Esophagus muscularis mucosa (tissue), 4 donors: ENCODE measurements at regions of chr3 and their contacts with region 1.

Region 1: DNA sequence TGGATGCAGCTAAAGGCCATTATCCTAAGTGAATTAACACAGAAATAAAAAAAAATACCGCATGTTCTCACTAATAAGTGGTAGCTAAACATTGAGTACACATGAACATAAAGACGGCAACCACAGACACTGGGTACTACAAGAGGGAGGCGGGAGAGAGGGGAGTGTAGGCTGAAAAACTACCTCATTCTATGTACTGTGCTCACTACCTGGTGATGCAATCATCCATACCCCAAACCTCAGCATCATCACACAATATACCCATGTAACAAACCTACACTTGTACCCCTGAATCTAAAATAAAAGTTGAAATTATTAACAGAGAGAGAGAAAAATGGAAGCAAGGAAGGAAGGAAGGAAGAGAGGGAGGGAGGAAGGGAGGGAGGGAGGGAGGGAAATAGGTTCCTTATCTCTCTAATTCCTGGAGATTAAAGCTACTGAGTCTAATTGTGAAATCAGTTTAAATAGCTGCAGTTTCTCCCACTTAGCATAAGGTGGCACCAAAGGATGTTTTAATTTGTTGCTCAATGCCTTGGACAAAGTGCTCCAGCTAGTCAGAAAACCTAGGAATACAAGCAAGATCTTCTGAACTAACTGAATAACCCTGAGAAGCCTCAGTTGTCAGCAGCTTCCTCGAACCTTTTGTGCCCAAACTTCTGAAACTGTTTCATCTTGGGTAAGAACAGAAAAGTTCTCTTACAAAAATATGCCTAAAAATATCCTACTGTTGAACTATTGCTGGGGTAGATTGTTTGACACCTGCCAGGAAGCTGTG is 79.4 kb upstream of the ATP11B start:
- DNase-seq: no peak
- H3K4me3 ChIP-seq: no peak overlapping the region
- H3K27ac ChIP-seq: no peak overlapping the region
- H3K4me1 ChIP-seq: no peaks in the 10 kb centered on the region
- H3K27me3 ChIP-seq: no peaks in the 10 kb centered on the region
- CTCF ChIP-seq: peak; percentile 57 to 65 (median 59)
- EP300 ChIP-seq: no peak
- POLR2A ChIP-seq: no peak

Region 2: DNA sequence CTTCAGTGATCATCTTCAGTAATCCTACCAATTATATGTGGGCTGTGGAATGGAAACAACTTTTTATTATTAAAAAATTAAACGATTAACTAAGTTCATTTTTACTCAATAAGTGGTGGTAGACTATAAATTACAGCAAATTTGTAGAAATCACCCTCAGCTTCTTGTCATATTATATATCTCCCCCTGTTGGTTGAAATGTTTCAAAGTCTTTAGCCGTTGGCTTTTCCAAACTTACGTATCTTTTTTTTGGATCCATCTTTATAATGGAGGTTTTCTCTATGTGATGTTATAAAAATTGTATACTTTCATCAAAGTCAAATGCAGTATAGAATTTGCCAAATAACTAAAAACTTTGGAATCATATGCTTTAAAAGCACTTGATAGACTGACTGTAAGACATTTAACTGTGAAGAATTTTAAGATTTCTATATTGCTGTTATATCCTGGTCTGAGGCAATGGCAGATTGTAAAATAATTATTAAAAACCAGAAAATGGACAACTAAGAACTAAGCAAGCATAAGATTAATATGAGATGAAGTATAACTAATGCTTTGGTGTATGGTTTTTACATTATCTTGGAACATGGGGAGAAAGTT is 124.0 kb after region 1 on chr3:
- intact Hi-C with region 1: loop called (anchors 5 kb)
- DNase-seq: no peak
- H3K4me3 ChIP-seq: no peak overlapping the region
- H3K27ac ChIP-seq: no peak overlapping the region
- H3K4me1 ChIP-seq: peaks cover 0 to 3% (median under 1%) of the 10 kb centered on the region in 4 donors
- H3K27me3 ChIP-seq: no peaks in the 10 kb centered on the region
- CTCF ChIP-seq: peak; percentile 27 to 51 (median 37)
- EP300 ChIP-seq: no peak
- POLR2A ChIP-seq: no peak